ENCODE measurements at regions of chrX and their contacts with region 1.

Region 1: GRCh38 chrX:31178064-31178768 is 106.4 kb upstream of the FTHL17 start:
- DNase-seq: no peak
- H3K4me3 Mint-ChIP-seq: no peak overlapping the region
- H3K27ac Mint-ChIP-seq: peak overlapping the region; percentile 31
- H3K4me1 Mint-ChIP-seq: peaks cover 20% of the 10 kb centered on the region
- H3K27me3 Mint-ChIP-seq: peaks cover 2% of the 10 kb centered on the region

Region 2: DNA sequence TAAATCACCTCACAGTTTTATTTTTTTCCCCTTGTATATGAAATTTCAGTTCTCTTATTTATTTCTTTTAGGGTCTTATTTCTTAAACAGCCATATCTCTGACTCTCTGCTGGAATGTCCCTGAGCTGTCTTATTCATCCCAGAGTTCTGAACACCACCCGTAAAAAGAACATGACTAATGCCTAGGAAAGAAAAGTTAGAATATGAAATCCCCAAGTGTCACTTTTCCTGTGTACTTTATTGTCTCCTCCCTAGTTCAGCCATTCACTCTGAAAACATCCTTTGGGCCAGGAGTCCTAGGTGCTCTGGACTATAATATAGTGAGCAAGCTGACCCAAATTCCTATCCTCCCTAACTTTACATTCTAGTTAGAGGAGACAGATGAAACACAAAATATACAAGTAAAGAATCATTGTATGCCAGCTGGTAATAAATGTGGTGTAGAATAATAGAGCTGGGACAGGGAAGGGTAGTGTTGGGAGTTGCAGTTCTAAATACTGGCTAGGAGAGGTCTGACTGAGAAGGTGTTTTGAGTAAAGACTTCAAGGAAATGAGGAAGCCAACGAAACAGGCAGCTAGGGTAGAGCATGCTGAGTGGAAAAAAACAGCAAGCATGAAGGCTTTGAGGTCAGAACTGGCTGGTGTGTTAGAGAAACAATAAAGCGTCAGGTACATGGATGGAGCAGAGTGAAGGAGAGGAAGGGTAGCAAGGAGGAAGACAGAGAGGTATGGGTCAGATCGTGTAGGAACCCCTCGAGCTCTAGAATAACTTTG is 65.8 kb before region 1 on chrX:
- intact Hi-C with region 1: loop called (anchors 5 kb)
- DNase-seq: no peak
- H3K4me3 Mint-ChIP-seq: peak overlapping the region; percentile 0
- H3K27ac Mint-ChIP-seq: peak overlapping the region; percentile 87
- H3K4me1 Mint-ChIP-seq: peaks cover 30% of the 10 kb centered on the region
- H3K27me3 Mint-ChIP-seq: peaks cover 2% of the 10 kb centered on the region

Region 3: DNA sequence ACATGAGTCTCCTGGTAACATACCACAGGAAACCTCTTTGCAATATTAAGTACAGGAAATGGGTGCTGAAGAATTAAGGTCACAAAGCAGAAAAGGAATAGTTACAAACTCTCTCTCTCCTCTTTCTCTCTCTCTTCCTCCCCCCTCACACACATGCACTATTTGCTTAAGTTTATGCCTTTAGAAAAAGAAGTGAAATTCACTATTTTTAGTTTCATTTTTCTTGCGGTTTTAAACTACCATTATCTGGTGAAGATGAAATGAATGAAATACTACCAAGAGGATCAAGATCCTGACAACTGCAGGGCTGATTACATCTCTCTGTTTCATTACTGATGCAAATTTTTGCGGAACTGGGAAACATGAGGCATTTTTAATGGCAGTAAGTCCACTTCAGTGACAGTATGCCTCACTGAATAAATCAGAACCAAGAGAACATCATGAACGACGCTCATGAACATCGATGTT is 42.0 kb before region 1 on chrX:
- intact Hi-C with region 1: loop called (anchors 5 kb)
- DNase-seq: no peak
- H3K4me3 Mint-ChIP-seq: peak overlapping the region; percentile 48
- H3K27ac Mint-ChIP-seq: peak overlapping the region; percentile 79
- H3K4me1 Mint-ChIP-seq: peaks cover 23% of the 10 kb centered on the region
- H3K27me3 Mint-ChIP-seq: no peaks in the 10 kb centered on the region